Mammary epithelial cell (primary cell): ENCODE measurements at regions of chr5 and their contacts with region 1.

Region 1: DNA sequence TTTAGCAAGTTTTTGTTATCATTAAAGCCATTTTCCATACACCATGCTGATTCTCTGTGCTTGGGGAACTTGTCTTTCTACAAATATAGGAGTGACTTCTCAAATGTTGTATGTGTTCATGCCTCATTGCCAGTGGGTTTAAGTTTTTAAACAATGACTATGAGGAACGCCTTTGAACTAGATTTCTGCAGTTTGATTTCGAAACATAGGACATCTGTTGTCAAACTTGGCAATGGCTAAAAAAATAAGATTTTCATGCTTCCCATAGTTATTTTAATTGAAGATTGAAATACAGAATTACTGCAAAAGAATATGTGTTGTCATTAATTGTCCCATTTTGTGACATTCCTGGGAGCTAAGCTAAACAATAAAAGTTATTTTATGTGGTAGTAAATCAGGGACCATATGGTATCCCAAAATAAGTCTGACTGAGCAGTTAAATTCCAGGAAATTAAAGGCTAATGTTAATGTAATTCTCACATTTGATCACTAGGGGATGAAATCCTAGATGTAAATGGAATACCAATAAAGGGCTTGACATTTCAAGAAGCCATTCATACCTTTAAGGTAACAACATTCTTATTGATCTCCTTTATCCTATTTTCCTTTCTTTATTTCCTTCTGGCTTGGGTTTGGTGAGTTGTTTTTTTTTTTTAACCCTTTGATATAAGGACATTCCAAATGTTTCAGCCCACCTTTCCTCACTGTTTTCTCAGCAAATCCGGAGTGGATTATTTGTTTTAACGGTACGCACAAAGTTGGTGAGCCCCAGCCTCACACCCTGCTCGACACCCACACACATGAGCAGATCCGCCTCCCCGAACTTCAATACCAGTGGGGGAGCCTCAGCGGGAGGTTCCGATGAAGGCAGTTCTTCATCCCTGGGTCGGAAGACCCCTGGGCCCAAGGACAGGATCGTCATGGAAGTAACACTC is 116.7 kb downstream of the GOLPH3 start:
- DNase-seq: no peak
- H3K4me3 ChIP-seq: no peak overlapping the region
- H3K27ac ChIP-seq: no peak overlapping the region
- H3K4me1 ChIP-seq: peaks cover 11% of the 10 kb centered on the region
- H3K27me3 ChIP-seq: peaks cover 1% of the 10 kb centered on the region
- CTCF ChIP-seq: peak; percentile 30 to 32

Region 2: GRCh38 chr5:31921852-31922305 is 135.6 kb before region 1 on chr5:
- CTCF ChIA-PET with region 1: no interaction called
- dilution Hi-C with region 1: no loop called
- in situ Hi-C with region 1: loop called in 1 of 2 experiments (anchors 10 kb)
- intact Hi-C with region 1: no loop called
- DNase-seq: peak; percentile 97
- H3K4me3 ChIP-seq: peak overlapping the region in 1 of 3 experiments; percentile 18
- H3K27ac ChIP-seq: peak overlapping the region; percentile 89
- H3K4me1 ChIP-seq: peaks cover 16% of the 10 kb centered on the region
- H3K27me3 ChIP-seq: no peaks in the 10 kb centered on the region
- CTCF ChIP-seq: no peak

Region 3: DNA sequence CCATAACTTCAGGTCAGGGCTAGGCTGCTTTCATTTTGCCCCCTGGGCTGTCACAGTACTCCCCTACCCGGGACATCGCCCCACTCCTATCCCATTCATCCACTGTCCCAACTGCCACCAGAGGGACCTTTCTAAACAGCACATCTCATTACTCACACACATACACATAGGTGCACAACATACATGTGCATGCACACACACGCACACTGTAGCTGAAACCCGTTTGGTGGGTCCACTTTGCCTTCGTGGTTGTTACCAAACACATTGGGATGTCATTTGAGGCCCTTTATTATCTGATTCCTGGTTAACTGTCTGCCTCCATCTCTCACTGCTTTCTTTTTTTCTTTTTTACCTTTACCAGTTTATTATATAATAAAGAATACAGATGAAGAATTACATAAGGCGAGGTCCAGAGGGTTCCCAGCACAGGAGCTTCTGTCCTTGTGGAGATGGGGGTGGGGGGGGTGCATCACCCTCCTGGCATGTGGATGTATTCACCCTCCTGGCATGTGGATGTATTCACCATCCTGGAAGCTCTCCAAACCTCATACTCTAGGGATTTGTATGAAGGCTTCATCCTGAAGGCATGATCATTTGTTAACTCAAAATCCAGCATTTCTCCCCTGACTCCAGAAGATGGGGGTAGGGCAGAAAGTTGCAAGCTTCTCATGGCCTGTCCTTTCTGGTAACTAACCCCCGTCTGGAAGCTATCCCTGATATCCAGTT is 69.3 kb before region 1 on chr5:
- CTCF ChIA-PET with region 1: no interaction called
- dilution Hi-C with region 1: loop called (anchors 5 kb)
- in situ Hi-C with region 1: no loop called
- intact Hi-C with region 1: no loop called
- DNase-seq: peak; percentile 93
- H3K4me3 ChIP-seq: no peak overlapping the region
- H3K27ac ChIP-seq: no peak overlapping the region
- H3K4me1 ChIP-seq: peaks cover 34% of the 10 kb centered on the region
- H3K27me3 ChIP-seq: no peaks in the 10 kb centered on the region
- CTCF ChIP-seq: peak; percentile 10 to 14

Region 4: GRCh38 chr5:32083981-32084430 is 26.6 kb after region 1 on chr5:
- CTCF ChIA-PET with region 1: no interaction called
- dilution Hi-C with region 1: no loop called
- in situ Hi-C with region 1: no loop called
- intact Hi-C with region 1: no loop called
- DNase-seq: no peak
- H3K4me3 ChIP-seq: no peak overlapping the region
- H3K27ac ChIP-seq: no peak overlapping the region
- H3K4me1 ChIP-seq: no peaks in the 10 kb centered on the region
- H3K27me3 ChIP-seq: no peaks in the 10 kb centered on the region
- CTCF ChIP-seq: no peak

Region 5: DNA sequence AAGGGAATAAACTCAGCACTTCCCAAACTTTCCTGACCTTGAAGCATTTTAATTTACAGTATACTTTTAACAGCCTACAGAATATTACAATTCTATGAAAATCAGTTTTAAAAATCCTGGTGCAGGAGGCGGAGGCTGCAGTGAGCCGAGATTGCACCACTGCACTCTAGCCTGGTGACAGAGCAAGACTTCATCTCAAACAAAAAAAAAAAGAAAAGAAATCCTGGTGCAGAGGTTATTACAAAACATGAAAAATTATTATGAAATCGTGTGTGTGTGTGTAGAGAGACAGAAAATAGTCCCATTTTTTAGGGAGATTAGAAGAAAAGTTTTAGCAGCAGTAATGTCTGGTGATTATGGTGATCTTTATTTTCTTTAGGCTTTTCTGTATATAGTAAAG is 89.8 kb after region 1 on chr5:
- CTCF ChIA-PET with region 1: no interaction called
- dilution Hi-C with region 1: no loop called
- in situ Hi-C with region 1: no loop called
- intact Hi-C with region 1: no loop called
- DNase-seq: no peak
- H3K4me3 ChIP-seq: no peak overlapping the region
- H3K27ac ChIP-seq: no peak overlapping the region
- H3K4me1 ChIP-seq: no peaks in the 10 kb centered on the region
- H3K27me3 ChIP-seq: no peaks in the 10 kb centered on the region
- CTCF ChIP-seq: no peak